Right lobe of liver (tissue), 6 donors: ENCODE measurements at regions of chr12 and their contacts with region 1.

Region 1: DNA sequence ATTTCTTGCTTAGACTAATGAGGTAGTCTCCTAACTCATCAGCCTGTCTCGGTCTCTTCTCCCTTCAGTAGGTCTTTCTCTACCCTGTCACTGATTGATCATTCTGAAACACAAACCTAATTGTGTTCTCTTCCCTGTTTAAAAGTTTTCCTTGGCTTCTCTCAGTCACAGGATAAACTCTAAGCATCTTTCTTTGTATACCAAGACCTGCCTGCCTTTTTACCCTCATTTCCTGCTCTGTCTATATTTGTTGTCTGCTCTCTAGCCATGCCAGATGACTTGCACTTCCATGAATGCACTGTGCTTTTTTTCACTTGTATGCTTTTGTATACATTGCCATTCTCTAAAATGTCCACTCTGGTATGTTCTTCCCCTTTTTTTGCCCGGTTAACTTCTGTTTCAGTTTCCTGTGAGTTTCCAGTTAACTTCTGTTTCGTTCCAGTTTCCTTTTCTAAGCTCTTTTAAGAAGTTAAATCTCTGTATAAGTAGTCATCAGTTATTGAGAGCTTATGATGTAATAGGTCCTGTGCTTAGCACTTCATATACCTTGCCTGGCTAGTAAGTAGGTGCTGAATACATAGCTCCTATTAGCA is 12.8 kb downstream of the DIP2B start:
- DNase-seq: no peak
- ATAC-seq: peak; percentile 42 to 62 (median 53)
- H3K4me3 ChIP-seq: no peak overlapping the region
- H3K27ac ChIP-seq: peak overlapping the region; percentile 34 to 55 (median 36)
- H3K4me1 ChIP-seq: peaks cover 0 to 37% (median 16%) of the 10 kb centered on the region in 4 donors
- H3K27me3 ChIP-seq: no peaks in the 10 kb centered on the region
- CTCF ChIP-seq: no peak
- POLR2A ChIP-seq: no peak

Region 2: GRCh38 chr12:50620109-50620977 is 102.8 kb after region 1 on chr12:
- intact Hi-C with region 1: loop called in 1 of 2 experiments (anchors 10 kb)
- DNase-seq: no peak
- ATAC-seq: peak; percentile 18 to 37 (median 28)
- H3K4me3 ChIP-seq: no peak overlapping the region
- H3K27ac ChIP-seq: no peak overlapping the region
- H3K4me1 ChIP-seq: peaks cover 0 to 27% (median 0%) of the 10 kb centered on the region in 4 donors
- H3K27me3 ChIP-seq: no peaks in the 10 kb centered on the region
- CTCF ChIP-seq: no peak
- POLR2A ChIP-seq: no peak